Heart right ventricle (tissue), 16 donors: ENCODE measurements at regions of chr2 and their contacts with region 1.

Region 1: GRCh38 chr2:236507393-236508085 is 62.1 kb upstream of the ACKR3 start:
- DNase-seq: peak; percentile 19 to 47
- ATAC-seq: peak; percentile 50 to 79 (median 60)
- H3K4me3 ChIP-seq: peak overlapping the region; percentile 25 to 54 (median 45)
- H3K27ac ChIP-seq: no peak overlapping the region
- H3K4me1 ChIP-seq: peaks cover 0 to 7% (median under 1%) of the 10 kb centered on the region in 9 donors
- H3K27me3 ChIP-seq: peaks cover 0 to 24% (median 18%) of the 10 kb centered on the region in 7 donors
- CTCF ChIP-seq: no peak

Region 2: GRCh38 chr2:236352761-236353593 is 154.6 kb before region 1 on chr2:
- intact Hi-C with region 1: loop called in 6 of 10 experiments (anchors 5 to 10 kb)
- DNase-seq: no peak
- ATAC-seq: peak in 3 of 8 donors; percentile 46 to 57 (median 51)
- H3K4me3 ChIP-seq: no peak overlapping the region
- H3K27ac ChIP-seq: no peak overlapping the region
- H3K4me1 ChIP-seq: peaks cover 0 to 7% (median 0%) of the 10 kb centered on the region in 9 donors
- H3K27me3 ChIP-seq: no peaks in the 10 kb centered on the region
- CTCF ChIP-seq: peak; percentile 69 to 92 (median 84)

Region 3: GRCh38 chr2:236369661-236370062 is 137.9 kb before region 1 on chr2:
- intact Hi-C with region 1: loop called in 2 of 10 experiments (anchors 10 kb)
- DNase-seq: peak in 1 of 2 donors; percentile 46
- ATAC-seq: peak in 2 of 8 donors; percentile 56 to 66
- H3K4me3 ChIP-seq: no peak overlapping the region
- H3K27ac ChIP-seq: no peak overlapping the region
- H3K4me1 ChIP-seq: no peaks in the 10 kb centered on the region
- H3K27me3 ChIP-seq: peaks cover 0 to 45% (median 9%) of the 10 kb centered on the region in 7 donors
- CTCF ChIP-seq: no peak

Region 4: GRCh38 chr2:236464140-236464539 is 43.4 kb before region 1 on chr2:
- intact Hi-C with region 1: no loop called
- DNase-seq: no peak
- ATAC-seq: no peak
- H3K4me3 ChIP-seq: no peak overlapping the region
- H3K27ac ChIP-seq: no peak overlapping the region
- H3K4me1 ChIP-seq: no peaks in the 10 kb centered on the region
- H3K27me3 ChIP-seq: no peaks in the 10 kb centered on the region
- CTCF ChIP-seq: no peak

Region 5: DNA sequence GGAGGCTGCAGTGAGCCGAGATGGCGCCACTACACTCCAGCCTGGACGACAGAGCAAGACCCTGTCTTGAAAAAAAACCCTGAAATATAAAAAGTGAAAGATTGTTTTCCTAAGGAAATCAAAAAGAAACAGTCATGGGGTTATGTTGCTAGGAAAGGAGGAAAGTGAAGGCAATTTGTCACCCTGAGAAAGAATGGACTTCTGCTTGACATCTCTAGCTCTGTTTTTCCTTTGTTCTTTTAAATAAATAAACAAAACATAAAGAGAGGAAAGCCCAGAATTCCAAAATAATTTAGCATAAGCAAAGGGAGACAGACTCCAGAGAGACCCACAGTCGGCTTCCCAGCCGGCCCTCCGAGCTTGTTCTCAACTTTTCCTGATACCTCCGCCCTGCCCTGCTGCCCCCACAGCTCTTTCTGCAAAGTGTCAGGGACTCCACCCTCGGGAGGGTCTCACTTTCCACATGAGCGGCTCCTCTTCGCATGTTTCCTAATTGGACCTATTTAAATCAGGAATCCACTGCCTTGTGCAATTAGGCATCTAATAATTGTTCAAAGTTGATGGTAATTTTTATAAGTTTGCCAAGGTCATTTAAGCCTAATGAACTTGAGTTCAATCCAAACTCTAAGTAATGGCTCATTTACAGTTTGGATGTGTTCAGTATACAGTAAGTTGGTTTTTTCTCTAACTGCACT is 528.4 kb after region 1 on chr2:
- intact Hi-C with region 1: loop called in 2 of 10 experiments (anchors 5 kb)
- DNase-seq: no peak
- ATAC-seq: no peak
- H3K4me3 ChIP-seq: no peak overlapping the region
- H3K27ac ChIP-seq: no peak overlapping the region
- H3K4me1 ChIP-seq: peaks cover 0 to under 1% (median 0%) of the 10 kb centered on the region in 9 donors
- H3K27me3 ChIP-seq: peaks cover 0 to 5% (median 0%) of the 10 kb centered on the region in 7 donors
- CTCF ChIP-seq: no peak